Panc1 (cell line): ENCODE measurements at regions of chr2 and their contacts with region 1.

Region 1: DNA sequence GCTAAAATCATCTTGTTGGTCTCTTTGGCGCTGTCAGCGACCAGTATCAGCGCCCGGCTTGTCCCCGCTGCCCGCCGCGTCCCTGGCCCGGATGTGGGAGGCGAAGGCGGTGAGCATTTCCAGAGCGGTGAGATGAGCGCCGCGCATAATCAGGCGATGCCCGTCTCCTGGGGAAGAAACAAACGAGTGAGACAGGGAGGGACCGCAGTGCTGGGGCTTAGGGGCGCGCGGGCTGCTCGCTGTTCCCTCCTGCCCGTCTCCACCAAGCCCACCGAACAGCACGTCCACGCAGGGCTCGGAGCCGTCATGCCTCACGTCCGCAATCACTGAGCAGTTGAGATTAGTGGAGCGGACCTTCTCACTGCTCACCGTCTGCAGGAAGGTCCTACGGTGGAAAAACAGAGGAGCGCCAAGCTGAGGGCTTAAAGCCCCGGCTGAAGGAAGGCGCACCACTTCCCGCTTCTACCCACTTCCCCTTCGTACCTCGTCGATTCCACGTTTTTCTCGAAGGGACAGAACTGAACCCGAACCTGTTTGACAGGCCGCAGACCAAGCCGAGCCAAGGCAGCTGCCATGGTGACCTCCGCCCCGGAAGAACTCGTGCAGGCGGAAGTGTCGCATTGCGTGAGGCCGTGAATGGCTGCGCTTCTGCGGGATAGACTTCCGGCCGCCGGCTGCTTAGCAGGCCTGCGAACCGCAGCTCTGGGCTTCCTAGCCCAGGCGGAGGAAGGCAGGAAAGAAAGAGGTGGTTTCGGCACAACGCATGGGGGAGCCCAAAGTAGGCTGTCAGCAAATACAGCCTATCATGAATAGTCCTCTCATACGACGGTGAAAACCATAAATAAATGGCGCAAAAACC is at the start of gene MRPL53:
- DNase-seq: peak; percentile 80
- ATAC-seq: peak; percentile 95
- H3K4me3 ChIP-seq: peak within 1 kb of the TSS; percentile 70 to 86
- H3K27ac ChIP-seq: peak within 1 kb of the TSS; percentile 95
- H3K4me1 ChIP-seq: peaks cover under 1% of the 10 kb centered on the region; the same call in 1 of the 2 replicates
- H3K27me3 ChIP-seq: no peaks in the 10 kb centered on the region
- CTCF ChIP-seq: no peak
- total RNA-seq, gene MRPL53: 98.1 TPM

Region 2: DNA sequence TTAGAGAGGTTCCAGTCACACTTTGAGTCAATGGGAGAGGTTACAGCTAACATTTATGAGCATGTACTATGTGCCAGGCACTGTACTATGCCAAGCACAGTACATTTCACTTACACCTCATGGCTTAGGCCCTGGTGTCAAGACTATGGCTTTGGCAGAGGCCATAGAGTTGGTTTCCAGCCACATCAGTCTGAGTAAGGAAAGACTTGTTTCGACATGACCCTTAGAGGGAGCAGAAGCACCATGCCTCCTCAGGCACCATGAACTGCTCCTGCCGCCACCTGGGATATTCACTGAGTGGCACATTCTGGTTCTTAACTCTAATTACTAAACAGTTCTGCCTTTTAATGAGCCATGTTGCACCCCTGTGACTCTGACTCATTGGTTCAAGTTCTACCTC is 532.9 kb before region 1 on chr2:
- CTCF ChIA-PET with region 1: no interaction called
- POLR2A ChIA-PET with region 1: no interaction called
- in situ Hi-C with region 1: no loop called
- intact Hi-C with region 1: no loop called
- DNase-seq: no peak
- ATAC-seq: no peak
- H3K4me3 ChIP-seq: no peak overlapping the region
- H3K27ac ChIP-seq: no peak overlapping the region
- H3K4me1 ChIP-seq: no peaks in the 10 kb centered on the region
- H3K27me3 ChIP-seq: no peaks in the 10 kb centered on the region
- CTCF ChIP-seq: no peak

Region 3: GRCh38 chr2:74458132-74458925 is 14.0 kb before region 1 on chr2 and contains the start of gene WBP1:
- CTCF ChIA-PET with region 1: no interaction called
- POLR2A ChIA-PET with region 1: interaction called, 14 read pairs
- in situ Hi-C with region 1: no loop called
- intact Hi-C with region 1: no loop called
- DNase-seq: peak; percentile 100
- ATAC-seq: peak; percentile 90
- H3K4me3 ChIP-seq: peak within 1 kb of the TSS; percentile 95 to 100
- H3K27ac ChIP-seq: peak within 1 kb of the TSS; percentile 99
- H3K4me1 ChIP-seq: peaks cover 20% of the 10 kb centered on the region
- H3K27me3 ChIP-seq: no peaks in the 10 kb centered on the region
- CTCF ChIP-seq: no peak
- total RNA-seq, gene WBP1: 67.6 TPM